GM13976 (cell line): ENCODE measurements at regions of chr7 and their contacts with region 1.

Region 1: GRCh38 chr7:64562626-64563275 is at the start of gene ZNF680:
- DNase-seq: peak; percentile 89
- CTCF ChIP-seq: no peak

Region 2: DNA sequence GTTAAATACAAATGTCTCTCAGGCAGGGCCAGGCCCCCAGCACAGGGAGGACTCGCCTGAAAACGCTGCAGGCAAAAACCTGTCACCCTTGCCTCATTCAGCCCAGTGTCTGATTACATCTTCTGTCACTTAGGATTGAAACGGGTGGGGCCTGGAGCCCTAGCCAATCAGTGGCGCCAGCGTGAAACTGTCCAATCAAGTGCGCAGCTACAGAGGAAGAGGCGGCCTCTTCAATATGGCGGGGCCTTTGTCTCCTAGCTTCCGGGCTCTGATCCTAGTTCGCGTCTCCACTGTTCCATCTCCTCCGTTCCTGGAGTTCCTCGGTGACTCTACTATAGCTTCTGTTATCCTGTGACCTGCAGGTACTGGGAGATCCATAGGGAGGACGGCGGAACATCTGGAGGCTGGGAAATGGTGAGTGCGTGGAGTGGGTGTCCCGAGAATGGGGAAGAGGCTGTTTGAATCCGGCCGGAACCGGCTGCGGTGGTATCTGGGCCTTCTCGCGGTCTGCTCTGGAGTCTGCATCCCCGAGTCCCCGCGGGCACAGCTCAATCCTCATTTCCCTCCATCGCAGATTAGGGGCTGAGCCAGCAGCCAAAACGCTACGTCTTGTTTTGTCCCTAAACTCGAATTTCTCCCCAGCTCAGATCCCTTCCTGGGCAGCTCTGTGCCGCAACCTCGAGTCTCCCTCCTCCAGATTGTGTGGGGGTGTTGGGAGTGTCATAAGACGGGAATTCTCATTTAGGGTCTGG is 248.8 kb before region 1 on chr7 and contains the start of gene ZNF736:
- in situ Hi-C with region 1: loop called (anchors 25 kb)
- DNase-seq: peak; percentile 85
- CTCF ChIP-seq: no peak